Activated CD4-positive, alpha-beta memory T cell treated with anti-CD3 and anti-CD28 coated beads, Interleukin-2, amount 10 ng/mL, durations not matched to agents 7 days and 5 days (primary cell): ENCODE measurements at regions of chr15 and their contacts with region 1.

Region 1: DNA sequence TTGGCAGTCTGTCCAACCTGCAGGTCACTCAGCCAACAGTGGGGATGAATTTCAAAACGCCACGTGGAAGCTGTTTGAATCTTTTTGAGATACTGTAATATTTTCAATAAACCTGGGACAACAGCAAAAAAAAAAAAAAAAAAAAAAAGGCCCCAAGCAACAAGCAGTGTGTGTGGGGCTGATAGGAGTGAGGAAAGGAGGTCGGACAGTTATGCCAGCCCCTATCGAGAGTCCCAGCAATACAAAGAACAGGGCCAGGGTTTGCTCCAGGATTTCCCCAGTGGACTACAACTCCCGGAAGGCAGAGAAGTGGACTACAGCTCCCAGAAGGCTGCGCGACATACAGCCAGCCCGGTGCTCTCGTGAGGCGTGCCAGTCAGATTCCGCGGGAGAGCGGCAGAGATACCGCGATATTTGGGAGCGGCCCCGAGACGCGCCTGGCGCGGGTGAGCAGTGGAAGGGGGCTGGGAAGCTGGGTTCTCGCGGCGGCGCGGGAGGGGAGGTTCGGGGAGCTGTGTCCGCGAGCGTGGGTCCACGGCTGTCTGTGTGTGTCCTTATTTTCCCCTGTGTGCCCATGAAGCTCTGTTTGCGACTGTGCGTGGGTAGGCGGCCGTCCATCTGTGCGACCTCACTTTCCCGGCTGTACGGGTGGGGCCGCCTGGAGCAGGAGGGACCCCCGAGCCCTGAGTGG is at the start of gene PPCDC:
- DNase-seq: peak; percentile 97
- H3K4me3 Mint-ChIP-seq: peak within 1 kb of the TSS; percentile 94
- H3K27ac Mint-ChIP-seq: peak within 1 kb of the TSS; percentile 83
- H3K4me1 Mint-ChIP-seq: peaks cover 18% of the 10 kb centered on the region
- H3K27me3 Mint-ChIP-seq: no peaks in the 10 kb centered on the region
- total RNA-seq, gene PPCDC: 43.0 to 50.2 TPM

Region 2: GRCh38 chr15:74995241-74995778 is 28.0 kb before region 1 on chr15 and contains the start of gene SCAMP5:
- CTCF ChIA-PET with region 1: no interaction called
- POLR2A ChIA-PET with region 1: interaction called, 10 read pairs
- DNase-seq: peak; percentile 94
- H3K4me3 Mint-ChIP-seq: peak within 1 kb of the TSS; percentile 71
- H3K27ac Mint-ChIP-seq: peak within 1 kb of the TSS; percentile 15
- H3K4me1 Mint-ChIP-seq: peaks cover 16% of the 10 kb centered on the region
- H3K27me3 Mint-ChIP-seq: peaks cover 44% of the 10 kb centered on the region
- total RNA-seq, gene SCAMP5: 0.60 to 0.81 TPM

Region 3: DNA sequence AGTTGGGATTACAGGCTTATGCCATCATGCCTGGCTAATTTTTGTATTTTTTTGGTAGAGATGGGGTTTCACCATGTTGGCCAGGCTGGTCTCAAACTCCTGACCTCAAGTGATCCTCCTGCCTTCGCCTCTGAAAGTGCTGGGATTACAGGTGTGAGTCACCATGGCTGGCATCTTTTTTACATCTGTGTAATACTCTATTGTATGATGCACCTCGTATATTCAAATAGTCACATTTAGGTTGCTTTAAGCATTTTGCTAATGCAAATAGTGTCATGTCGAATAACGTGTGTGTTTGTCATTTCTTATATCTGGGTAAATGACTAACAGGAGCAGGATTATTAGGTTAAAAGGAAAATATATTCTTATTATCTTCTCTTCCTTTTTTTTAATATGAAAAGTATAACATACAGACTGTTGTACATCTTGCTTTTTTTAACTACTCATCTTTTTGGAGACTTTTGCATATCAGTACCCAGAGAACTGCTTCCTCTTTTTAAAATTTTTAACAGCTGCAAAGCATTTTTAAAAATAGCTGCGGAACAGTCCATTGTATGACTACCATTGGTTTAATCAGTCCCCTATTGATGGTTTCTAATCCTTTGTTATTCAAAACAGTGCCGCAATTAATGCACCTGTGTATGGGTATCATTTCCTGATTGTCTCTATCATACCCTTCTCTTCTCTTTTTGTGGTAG is 14.5 kb before region 1 on chr15:
- CTCF ChIA-PET with region 1: no interaction called
- POLR2A ChIA-PET with region 1: interaction called, 18 read pairs
- DNase-seq: no peak
- H3K4me3 Mint-ChIP-seq: no peak overlapping the region
- H3K27ac Mint-ChIP-seq: no peak overlapping the region
- H3K4me1 Mint-ChIP-seq: peaks cover 7% of the 10 kb centered on the region
- H3K27me3 Mint-ChIP-seq: peaks cover 15% of the 10 kb centered on the region

Region 4: DNA sequence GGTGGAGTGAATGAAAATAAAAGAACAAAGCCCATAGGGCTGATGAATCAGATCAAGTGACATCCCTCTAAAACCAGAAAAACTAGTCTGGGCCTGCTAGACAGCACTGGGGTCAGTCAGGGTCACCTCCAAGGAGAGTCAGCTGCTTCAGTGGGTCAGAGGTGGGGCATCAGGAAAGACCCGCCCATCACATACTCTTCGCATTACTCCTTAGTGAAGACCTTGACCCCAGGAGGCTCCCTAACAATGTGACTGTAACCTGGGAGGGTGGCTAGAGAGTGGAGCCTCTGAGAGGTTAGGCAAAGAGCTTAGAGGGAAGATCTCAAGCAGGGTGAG is 13.0 kb after region 1 on chr15:
- CTCF ChIA-PET with region 1: interaction called, 39 read pairs
- POLR2A ChIA-PET with region 1: interaction called, 10 read pairs
- DNase-seq: no peak
- H3K4me3 Mint-ChIP-seq: no peak overlapping the region
- H3K27ac Mint-ChIP-seq: no peak overlapping the region
- H3K4me1 Mint-ChIP-seq: peaks cover 59% of the 10 kb centered on the region
- H3K27me3 Mint-ChIP-seq: no peaks in the 10 kb centered on the region

Region 5: DNA sequence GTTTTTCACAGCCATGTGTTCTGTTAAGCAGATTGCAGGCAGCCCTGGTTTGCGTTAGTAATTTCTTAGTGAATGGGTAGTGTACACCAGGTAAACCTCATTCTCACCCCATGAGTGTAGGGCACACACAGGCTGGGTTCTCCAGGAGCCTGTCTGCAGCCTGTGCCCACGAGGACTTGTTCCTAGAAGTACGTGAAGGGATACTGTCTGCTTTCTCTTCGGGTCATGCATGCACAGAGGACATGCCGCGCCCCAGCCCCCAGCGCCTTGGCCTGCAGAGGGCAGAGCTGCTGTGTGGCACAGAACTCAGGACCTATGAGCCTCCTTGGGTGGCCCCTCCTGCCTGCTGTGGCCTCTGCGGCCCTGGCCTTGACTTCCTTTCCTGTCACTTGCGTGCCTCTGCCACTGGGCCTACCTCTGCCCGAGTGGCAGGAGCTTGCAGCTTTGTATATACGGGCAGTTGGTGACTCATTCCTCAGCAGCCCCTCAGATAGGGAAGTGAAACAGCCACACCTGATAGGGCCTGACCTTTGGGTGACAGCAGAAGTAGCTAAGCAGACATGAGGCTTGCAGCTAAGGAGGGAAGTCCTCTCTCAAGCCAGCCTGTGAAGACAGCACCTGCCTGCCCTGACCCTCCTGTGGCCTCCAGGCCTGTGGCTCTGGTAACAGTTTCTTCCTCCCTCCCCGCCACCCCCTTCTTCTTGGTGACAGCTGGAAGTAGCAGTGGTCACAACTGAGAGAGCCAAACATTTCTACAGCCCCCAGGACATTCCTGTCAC is 19.6 kb after region 1 on chr15:
- CTCF ChIA-PET with region 1: interaction called, 39 read pairs
- POLR2A ChIA-PET with region 1: interaction called, 21 read pairs
- DNase-seq: peak; percentile 92
- H3K4me3 Mint-ChIP-seq: peak overlapping the region; percentile 74
- H3K27ac Mint-ChIP-seq: peak overlapping the region; percentile 86
- H3K4me1 Mint-ChIP-seq: peaks cover 91% of the 10 kb centered on the region
- H3K27me3 Mint-ChIP-seq: no peaks in the 10 kb centered on the region

Region 6: DNA sequence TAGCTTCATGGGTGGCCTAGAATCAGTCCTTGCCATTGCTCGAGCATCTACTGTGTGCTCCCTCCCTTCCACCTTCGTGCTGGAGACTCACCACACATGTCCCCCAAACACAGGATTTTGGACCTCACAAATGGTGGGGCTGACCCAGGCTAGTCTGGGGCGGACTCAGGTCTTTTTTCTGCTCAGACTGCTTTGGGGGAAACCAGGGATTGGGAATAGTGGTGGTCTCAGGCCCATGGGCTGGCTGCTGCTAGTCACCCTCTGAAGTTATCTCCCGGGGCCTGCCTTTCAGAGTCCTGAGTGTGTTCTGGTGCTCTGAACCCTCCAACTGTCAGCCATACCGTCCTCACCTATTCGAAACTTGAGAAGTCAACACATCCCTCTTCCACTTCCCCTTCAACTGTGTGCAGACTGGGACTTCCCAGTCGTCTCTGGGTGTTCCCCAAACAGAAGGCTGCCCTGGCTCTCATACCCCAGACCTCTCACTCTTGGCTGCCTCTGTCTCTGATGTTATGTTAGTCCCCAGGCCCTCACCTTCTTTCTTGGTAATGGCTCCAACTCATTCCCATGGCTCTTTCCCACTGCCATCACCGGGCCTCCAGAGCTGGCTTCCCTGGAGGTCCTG is 46.1 kb after region 1 on chr15:
- CTCF ChIA-PET with region 1: no interaction called
- POLR2A ChIA-PET with region 1: interaction called, 10 read pairs
- DNase-seq: no peak
- H3K4me3 Mint-ChIP-seq: no peak overlapping the region
- H3K27ac Mint-ChIP-seq: peak overlapping the region; percentile 95
- H3K4me1 Mint-ChIP-seq: peaks cover 78% of the 10 kb centered on the region
- H3K27me3 Mint-ChIP-seq: no peaks in the 10 kb centered on the region